ENCODE measurements at regions of chr10 and their contacts with region 1.

Region 1: GRCh38 chr10:101879456-101880231 is 36.0 kb upstream of the KCNIP2 start:
- DNase-seq: no peak
- CTCF ChIP-seq: no peak

Region 2: GRCh38 chr10:101660256-101660655 is 219.4 kb before region 1 on chr10:
- CTCF ChIA-PET with region 1: no interaction called
- POLR2A ChIA-PET with region 1: no interaction called
- DNase-seq: no peak
- CTCF ChIP-seq: no peak

Region 3: GRCh38 chr10:101858723-101859500 is 20.7 kb before region 1 on chr10:
- CTCF ChIA-PET with region 1: interaction called, 40 read pairs
- POLR2A ChIA-PET with region 1: no interaction called
- DNase-seq: peak; percentile 60
- CTCF ChIP-seq: no peak

Region 4: DNA sequence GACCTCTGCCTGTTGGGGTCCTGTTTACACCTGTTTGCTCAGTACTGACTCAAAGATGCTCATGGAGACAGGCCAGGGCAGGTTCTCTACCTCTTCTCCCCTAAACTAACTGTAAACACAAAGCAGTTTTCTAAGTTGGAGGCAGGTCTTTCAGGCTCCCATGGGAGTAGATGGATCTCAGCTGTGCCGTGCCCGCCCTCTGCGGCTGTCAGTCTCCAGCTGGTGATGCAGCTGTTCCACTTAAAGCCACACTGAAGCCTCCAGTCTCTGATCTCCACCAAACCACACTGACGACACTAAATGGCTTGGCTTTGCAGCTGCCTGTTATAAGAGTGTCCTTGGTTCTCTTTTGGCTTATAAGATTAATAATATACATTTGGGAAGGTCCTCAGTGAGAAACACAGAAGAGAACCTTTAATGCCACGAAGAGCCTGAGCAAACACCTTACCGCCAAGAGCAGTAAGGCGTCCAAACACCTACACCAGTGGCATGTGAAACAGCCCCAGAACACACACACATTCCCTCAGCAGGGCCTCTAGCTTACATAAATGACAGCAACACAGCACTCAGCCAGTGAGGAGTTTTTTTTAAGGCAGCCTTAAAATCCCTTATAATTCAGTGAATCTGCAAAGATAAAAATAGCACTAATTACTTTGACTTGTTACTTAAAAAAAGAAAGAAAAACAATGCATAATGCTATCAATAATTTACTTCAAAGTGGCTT is 24.3 kb after region 1 on chr10:
- CTCF ChIA-PET with region 1: interaction called, 23 read pairs
- POLR2A ChIA-PET with region 1: no interaction called
- DNase-seq: peak; percentile 67
- CTCF ChIP-seq: no peak

Region 5: DNA sequence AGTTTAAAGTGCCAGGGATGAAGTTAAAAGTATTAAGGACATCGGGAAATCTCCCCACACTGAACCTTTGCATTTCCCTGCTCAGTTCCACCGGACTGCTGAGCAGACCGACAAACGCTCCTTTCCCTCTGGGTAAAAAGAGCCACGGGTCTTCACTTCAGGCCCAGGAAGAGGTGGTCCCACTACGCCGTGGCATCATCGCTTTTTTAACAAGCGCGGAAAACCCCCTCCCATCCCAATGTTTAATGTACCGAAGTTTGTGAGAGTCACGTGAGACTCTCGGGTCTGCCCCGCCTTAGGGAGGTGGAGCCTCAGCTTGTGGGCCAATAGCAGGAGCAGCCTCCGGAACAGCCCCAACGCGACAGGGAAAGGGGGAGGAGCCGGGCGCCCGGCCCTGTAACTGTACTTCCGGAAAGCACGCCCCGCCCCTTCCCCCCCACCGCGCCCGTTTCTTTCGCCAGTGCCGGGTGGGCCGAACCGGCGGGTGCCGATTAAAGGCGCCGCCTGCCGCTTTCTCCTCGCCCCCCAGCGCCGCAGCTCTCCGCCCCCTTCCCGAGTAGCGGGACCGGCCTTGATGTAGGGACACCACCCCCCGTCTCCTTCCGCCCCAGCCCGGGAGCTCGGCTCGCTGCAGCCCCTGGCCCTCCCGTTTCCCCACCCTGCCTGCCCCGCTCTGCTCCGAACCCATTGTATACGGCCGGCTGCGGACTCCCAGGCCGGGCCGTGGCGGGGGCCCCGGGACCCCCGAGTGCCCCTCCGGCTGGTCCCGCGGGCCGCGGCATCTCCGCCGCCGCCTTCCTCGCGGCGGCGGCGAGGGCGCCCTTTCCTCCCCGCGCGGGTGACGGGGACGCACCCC is 762.5 kb after region 1 on chr10:
- CTCF ChIA-PET with region 1: no interaction called
- POLR2A ChIA-PET with region 1: no interaction called
- DNase-seq: peak; percentile 96
- CTCF ChIP-seq: no peak